GM18951 (cell line): ENCODE measurements at regions of chr5 and their contacts with region 1.

Region 1: GRCh38 chr5:66171349-66172344 is 27.5 kb downstream of the SREK1 start:
- POLR2A ChIP-seq: no peak

Region 2: GRCh38 chr5:65760504-65761275 is 411.0 kb before region 1 on chr5:
- in situ Hi-C with region 1: loop called (anchors 25 kb)
- POLR2A ChIP-seq: no peak

Region 3: GRCh38 chr5:66285343-66285922 is 113.8 kb after region 1 on chr5:
- in situ Hi-C with region 1: no loop called
- POLR2A ChIP-seq: no peak